ENCODE measurements at regions of chr17 and their contacts with region 1.

Region 1: GRCh38 chr17:67376737-67377487 is at the start of gene PITPNC1:
- ATAC-seq: peak; percentile 64 to 83 (median 80)
- H3K4me3 ChIP-seq: peak within 1 kb of the TSS; percentile 59 to 90 (median 67)
- H3K27ac ChIP-seq: peak within 1 kb of the TSS; percentile 71 to 77
- H3K4me1 ChIP-seq: peaks cover 2 to 7% of the 10 kb centered on the region in 2 donors
- total RNA-seq, gene PITPNC1: 8.8 to 67.0 (median 19.7) TPM

Region 2: GRCh38 chr17:67260170-67261011 is 116.5 kb before region 1 on chr17:
- in situ Hi-C with region 1: no loop called
- ATAC-seq: peak in 3 of 8 experiments; percentile 45 to 81 (median 76)
- H3K4me3 ChIP-seq: no peak overlapping the region
- H3K27ac ChIP-seq: no peak overlapping the region
- H3K4me1 ChIP-seq: peaks cover 7 to 8% of the 10 kb centered on the region in 2 donors

Region 3: GRCh38 chr17:67475236-67475937 is 98.5 kb after region 1 on chr17:
- in situ Hi-C with region 1: loop called in 3 of 9 experiments (anchors 10 to 25 kb)
- ATAC-seq: peak; percentile 39 to 83 (median 72)
- H3K4me3 ChIP-seq: peak overlapping the region in 1 of 5 donors; percentile 2
- H3K27ac ChIP-seq: peak overlapping the region in 1 of 2 donors; percentile 15
- H3K4me1 ChIP-seq: peaks cover 17 to 31% of the 10 kb centered on the region in 2 donors

Region 4: GRCh38 chr17:67602956-67603355 is 226.0 kb after region 1 on chr17:
- in situ Hi-C with region 1: loop called in 1 of 9 experiments (anchors 25 kb)
- ATAC-seq: peak in 5 of 8 experiments; percentile 29 to 75 (median 59)
- H3K4me3 ChIP-seq: no peak overlapping the region
- H3K27ac ChIP-seq: no peak overlapping the region
- H3K4me1 ChIP-seq: peaks cover 0 to 3% of the 10 kb centered on the region in 2 donors

Region 5: GRCh38 chr17:67629971-67630320 is 253.0 kb after region 1 on chr17:
- in situ Hi-C with region 1: no loop called
- ATAC-seq: peak in 3 of 8 experiments; percentile 52 to 90 (median 83)
- H3K4me3 ChIP-seq: no peak overlapping the region
- H3K27ac ChIP-seq: no peak overlapping the region
- H3K4me1 ChIP-seq: peaks cover 0 to 6% of the 10 kb centered on the region in 2 donors

Region 6: GRCh38 chr17:67689534-67690177 is 312.7 kb after region 1 on chr17:
- in situ Hi-C with region 1: loop called in 7 of 9 experiments (anchors 10 to 25 kb)
- ATAC-seq: peak in 5 of 8 experiments; percentile 21 to 35 (median 29)
- H3K4me3 ChIP-seq: no peak overlapping the region
- H3K27ac ChIP-seq: no peak overlapping the region
- H3K4me1 ChIP-seq: no peaks in the 10 kb centered on the region

Region 7: DNA sequence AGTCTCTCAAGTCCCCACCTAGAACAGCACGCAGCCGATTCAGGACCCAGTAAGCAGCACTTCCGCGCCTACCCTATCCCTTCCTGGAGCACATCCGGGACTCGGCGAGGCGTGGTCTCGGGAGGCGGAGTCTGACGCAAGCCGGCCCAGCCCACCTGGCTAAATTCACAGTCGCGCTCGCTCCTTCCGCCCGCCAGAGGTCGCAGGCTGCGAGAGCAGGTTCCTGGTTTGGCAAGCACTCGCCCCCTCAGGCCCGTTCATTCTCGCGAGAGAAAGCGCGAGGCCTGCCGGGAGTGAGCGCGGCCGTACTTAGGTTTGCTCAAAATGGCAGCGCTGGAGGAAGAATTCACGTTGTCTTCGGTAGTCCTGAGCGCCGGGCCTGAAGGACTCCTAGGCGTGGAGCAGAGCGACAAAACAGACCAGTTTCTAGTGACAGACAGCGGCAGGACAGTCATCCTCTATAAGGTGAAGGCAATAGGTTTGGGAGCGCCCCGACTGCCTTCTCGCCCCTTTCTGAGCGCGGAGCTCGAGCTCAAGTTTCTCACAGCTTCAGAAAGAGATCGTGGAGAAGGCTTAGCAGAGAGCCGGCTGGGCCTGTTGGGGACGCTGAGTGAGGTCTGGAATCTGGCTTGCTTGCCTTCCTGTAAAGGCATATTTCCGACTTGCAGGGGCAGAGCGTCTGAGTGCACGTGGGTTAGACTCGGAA is 340.9 kb after region 1 on chr17 and contains the start of gene NOL11:
- in situ Hi-C with region 1: loop called in 1 of 9 experiments (anchors 10 kb)
- ATAC-seq: peak; percentile 93 to 98 (median 98)
- H3K4me3 ChIP-seq: peak within 1 kb of the TSS; percentile 66 to 99 (median 76)
- H3K27ac ChIP-seq: peak within 1 kb of the TSS; percentile 88 to 94
- H3K4me1 ChIP-seq: peaks cover 17 to 20% of the 10 kb centered on the region in 2 donors
- total RNA-seq, gene NOL11: 29.4 to 59.8 (median 37.7) TPM

Region 8: GRCh38 chr17:68431661-68432071 is 1054.8 kb after region 1 on chr17:
- in situ Hi-C with region 1: no loop called
- ATAC-seq: peak in 3 of 8 experiments; percentile 19 to 46 (median 27)
- H3K4me3 ChIP-seq: no peak overlapping the region
- H3K27ac ChIP-seq: no peak overlapping the region
- H3K4me1 ChIP-seq: no peaks in the 10 kb centered on the region